MCF 10A (cell line): ENCODE measurements at regions of chr1 and their contacts with region 1.

Region 1: DNA sequence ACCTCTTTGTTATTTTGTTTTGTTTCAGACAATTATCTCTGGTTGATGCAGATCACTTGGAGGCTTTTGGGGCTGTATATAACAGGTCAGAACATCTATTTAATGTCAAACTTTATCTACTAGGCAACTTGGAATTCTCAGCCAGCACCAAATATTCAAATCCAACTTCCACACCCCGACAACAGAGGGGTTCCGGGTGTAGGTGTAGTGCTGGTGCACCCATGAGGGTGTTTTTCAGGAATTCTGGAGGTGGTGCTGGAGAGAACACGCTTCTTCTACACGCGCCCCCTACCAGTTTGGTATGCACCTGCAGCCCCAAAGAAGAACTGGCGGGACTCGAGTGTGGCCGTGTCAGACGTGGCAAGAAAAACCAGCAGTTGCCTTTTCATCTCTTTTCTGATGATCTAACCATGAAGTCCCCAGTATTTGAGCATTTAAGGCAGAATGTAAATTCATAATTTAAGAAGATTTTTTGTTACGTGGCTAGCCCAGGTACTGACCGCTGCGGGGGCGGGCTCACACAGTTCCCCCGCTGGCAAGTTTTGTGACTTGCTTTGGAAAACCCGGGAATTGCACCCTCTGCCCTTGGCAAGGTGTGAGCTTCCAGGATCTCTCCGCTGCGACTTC is 462 bp upstream of the TLCD4 start:
- DNase-seq: peak; percentile 78
- H3K4me3 Mint-ChIP-seq: peak overlapping the region; percentile 77
- H3K27ac Mint-ChIP-seq: no peak overlapping the region
- H3K4me1 Mint-ChIP-seq: peaks cover 21% of the 10 kb centered on the region
- H3K27me3 Mint-ChIP-seq: no peaks in the 10 kb centered on the region
- CTCF ChIP-seq: peak; percentile 61

Region 2: DNA sequence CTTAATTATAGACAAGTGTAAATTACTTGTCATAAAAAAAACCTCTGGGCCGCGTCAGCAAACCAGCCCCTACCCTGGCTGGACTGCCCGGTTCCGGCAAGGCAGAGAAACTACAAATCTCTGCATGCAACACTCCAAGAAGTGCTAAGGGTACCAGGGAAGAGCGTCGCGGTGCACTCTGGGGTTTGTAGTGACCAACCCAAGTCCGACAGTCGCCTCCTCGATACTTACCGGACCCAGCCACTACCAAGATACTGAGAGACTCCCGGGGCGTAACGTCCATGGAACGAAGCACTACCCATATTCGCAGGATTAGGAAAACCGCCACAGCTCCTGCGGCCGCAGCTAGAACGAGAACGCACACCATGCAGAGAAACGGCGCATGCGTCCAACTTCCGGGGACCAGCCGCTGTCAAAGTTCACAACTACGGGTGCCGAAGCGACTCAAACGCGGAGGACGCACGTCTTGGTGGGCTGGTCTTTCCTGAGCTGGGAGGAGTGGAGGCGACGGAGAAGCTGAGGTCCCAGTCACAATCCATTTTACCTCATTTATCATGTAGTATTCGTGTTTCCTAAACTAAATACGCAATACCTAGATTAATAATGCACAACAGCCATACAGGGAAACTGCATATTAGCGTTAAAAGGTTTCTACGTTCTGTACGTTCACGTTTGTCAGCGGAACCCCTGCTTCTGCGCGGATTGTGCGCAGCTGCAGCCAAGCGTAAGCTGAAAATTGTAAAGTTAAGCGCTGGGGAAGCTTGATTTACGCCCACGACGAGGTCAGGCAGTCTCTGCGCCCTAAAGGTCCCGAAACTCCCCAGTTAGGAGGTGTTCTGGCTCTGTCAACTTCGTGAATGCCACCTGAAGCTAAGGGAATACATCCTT is 43.9 kb before region 1 on chr1 and contains the start of gene ALG14:
- CTCF ChIA-PET with region 1: interaction called, 10 read pairs
- POLR2A ChIA-PET with region 1: interaction called, 21 read pairs
- intact Hi-C with region 1: loop called (anchors 2 kb)
- DNase-seq: peak; percentile 94
- H3K4me3 Mint-ChIP-seq: peak within 1 kb of the TSS; percentile 84
- H3K27ac Mint-ChIP-seq: peak within 1 kb of the TSS; percentile 90
- H3K4me1 Mint-ChIP-seq: peaks cover 9% of the 10 kb centered on the region
- H3K27me3 Mint-ChIP-seq: no peaks in the 10 kb centered on the region
- CTCF ChIP-seq: no peak
- total RNA-seq, gene ALG14: 13.0 and 15.5 TPM in 2 replicates

Region 3: DNA sequence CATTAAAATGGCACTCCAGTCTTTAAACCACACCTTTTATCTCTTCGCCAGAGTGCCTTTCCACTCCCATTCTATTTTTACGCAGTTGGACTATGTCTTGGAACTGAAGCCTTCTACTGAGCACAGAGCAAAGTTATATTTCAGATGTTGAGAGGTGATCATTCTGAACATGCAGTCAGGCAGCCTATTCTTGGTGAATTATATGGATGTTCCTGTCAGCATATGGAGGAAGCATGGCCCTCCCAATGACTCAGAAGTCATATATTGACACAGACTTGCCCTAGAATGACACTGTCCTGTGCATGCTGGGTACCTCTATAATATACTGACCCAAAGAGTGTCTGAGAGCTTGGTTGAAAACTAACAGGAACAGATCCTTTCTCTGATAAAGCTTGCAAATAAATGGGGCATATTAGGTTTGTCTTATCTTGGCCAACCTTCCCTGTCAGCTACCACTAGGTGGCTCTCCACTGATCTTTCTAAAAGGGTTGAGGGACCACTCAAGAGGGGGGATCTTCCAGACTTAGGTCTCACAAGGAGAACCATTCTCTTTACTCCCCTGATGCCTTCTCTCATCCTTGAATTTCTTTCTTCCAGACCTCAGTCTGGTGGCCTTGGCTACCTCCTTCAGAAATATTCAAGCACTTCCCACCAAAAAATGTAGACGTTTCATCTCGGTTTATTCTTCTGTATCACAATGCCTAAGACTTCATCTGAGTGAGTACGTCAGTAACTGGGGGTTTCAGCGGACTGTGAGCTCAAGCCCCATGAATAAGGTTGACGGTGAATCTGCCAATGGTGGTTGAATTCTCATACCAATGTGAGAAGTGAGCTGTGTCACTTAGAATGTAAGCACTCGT is 32.1 kb before region 1 on chr1:
- CTCF ChIA-PET with region 1: interaction called, 32 read pairs
- POLR2A ChIA-PET with region 1: no interaction called
- intact Hi-C with region 1: no loop called
- DNase-seq: peak; percentile 44
- H3K4me3 Mint-ChIP-seq: no peak overlapping the region
- H3K27ac Mint-ChIP-seq: no peak overlapping the region
- H3K4me1 Mint-ChIP-seq: no peaks in the 10 kb centered on the region
- H3K27me3 Mint-ChIP-seq: no peaks in the 10 kb centered on the region
- CTCF ChIP-seq: peak; percentile 66

Region 4: GRCh38 chr1:95127380-95127779 is 10.7 kb after region 1 on chr1:
- CTCF ChIA-PET with region 1: interaction called, 9 read pairs
- POLR2A ChIA-PET with region 1: interaction called, 23 read pairs
- intact Hi-C with region 1: no loop called
- DNase-seq: no peak
- H3K4me3 Mint-ChIP-seq: no peak overlapping the region
- H3K27ac Mint-ChIP-seq: no peak overlapping the region
- H3K4me1 Mint-ChIP-seq: no peaks in the 10 kb centered on the region
- H3K27me3 Mint-ChIP-seq: no peaks in the 10 kb centered on the region
- CTCF ChIP-seq: no peak

Region 5: DNA sequence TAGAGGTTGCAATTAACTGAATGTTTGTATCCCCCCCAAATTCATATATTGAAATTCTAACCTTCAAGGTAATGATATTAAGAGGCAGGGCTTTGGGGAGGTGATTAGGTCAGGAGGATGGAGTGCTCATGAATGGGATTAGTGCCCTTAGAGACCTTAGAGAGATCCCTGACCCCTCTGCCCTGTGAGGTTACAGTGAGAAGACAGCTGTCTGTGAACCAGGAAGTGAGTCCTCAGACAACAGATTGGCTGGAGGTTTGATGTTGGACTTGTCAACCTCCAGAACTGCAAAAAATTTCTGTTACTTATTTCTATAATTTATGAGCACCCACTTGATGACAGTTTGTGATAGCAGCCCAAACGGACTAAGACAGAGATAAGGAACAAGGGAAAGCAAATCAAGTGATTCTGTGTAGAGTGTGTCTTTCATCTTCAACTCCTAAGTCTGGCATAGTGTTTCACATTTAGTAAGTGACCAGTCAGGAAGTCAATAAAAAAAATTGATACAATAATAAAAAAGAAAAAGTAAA is 87.3 kb after region 1 on chr1:
- CTCF ChIA-PET with region 1: no interaction called
- POLR2A ChIA-PET with region 1: no interaction called
- intact Hi-C with region 1: no loop called
- DNase-seq: no peak
- H3K4me3 Mint-ChIP-seq: no peak overlapping the region
- H3K27ac Mint-ChIP-seq: no peak overlapping the region
- H3K4me1 Mint-ChIP-seq: no peaks in the 10 kb centered on the region
- H3K27me3 Mint-ChIP-seq: no peaks in the 10 kb centered on the region
- CTCF ChIP-seq: no peak